ENCODE measurements at regions of chr9 and their contacts with region 1.

Region 1: DNA sequence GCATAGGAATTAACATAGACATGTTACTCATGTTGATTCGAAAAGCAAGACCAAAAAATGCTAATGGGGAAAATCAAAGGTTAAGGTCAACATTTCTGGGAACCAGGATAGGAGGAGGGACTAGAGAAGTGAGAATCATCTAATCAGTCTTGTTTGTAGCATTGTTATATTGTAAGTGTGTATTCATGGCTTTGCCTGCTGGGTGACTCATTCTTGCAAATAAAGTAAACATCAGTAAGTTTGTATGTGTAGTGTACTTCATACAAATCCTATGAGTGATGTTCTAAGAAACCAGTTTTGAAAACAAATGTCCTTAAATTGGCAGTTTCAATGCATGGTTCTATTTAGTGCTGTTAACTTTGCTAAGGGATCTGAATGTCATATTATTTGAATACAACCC is 79.0 kb upstream of the TMEM252 start:
- DNase-seq: no peak
- ATAC-seq: no peak
- H3K4me3 Mint-ChIP-seq: no peak overlapping the region
- H3K27ac Mint-ChIP-seq: no peak overlapping the region
- H3K4me1 Mint-ChIP-seq: no peaks in the 10 kb centered on the region
- H3K27me3 Mint-ChIP-seq: peaks cover 9% of the 10 kb centered on the region

Region 2: DNA sequence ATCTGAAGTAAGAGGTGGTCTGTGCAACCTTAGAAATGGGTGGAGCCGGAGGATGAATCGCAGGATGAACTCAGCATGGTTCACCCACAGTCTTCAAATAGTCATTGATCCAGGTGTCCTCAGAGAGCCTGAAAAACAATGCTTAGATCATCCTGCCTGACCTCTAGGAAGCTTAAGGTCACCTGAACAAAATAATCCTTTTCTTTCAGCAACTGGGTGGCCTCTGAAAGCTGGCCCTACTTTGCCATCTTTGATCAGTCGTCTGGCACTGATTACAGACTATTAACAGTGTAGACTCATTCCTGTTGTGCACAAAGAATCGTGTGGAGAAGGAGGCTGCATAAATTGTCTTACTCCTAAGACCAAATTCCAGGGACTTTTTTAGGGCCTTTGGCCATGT is 136.1 kb after region 1 on chr9:
- CTCF ChIA-PET with region 1: no interaction called
- POLR2A ChIA-PET with region 1: no interaction called
- intact Hi-C with region 1: loop called in 1 of 2 experiments (anchors 1 kb)
- DNase-seq: no peak
- ATAC-seq: no peak
- H3K4me3 Mint-ChIP-seq: no peak overlapping the region
- H3K27ac Mint-ChIP-seq: no peak overlapping the region
- H3K4me1 Mint-ChIP-seq: no peaks in the 10 kb centered on the region
- H3K27me3 Mint-ChIP-seq: peaks cover 18% of the 10 kb centered on the region

Measured in activated CD4-positive, alpha-beta T cell treated with anti-CD3 and anti-CD28 coated beads for 36 hours (primary cell).